ENCODE measurements at regions of chr16 and their contacts with region 1.

Region 1: GRCh38 chr16:3282730-3283524 is at the start of gene ZNF263:
- DNase-seq: peak; percentile 95
- ATAC-seq: peak; percentile 90
- H3K4me3 ChIP-seq: peak within 1 kb of the TSS; percentile 69 to 91
- H3K27ac ChIP-seq: peak within 1 kb of the TSS; percentile 96
- H3K4me1 ChIP-seq: peaks cover 8 to 21% of the 10 kb centered on the region in 2 experiments; a peak in 2 of 4 replicates
- H3K27me3 ChIP-seq: no peaks in the 10 kb centered on the region
- CTCF ChIP-seq: no peak
- POLR2A ChIP-seq: peak; percentile 64
- RAD21 ChIP-seq: no peak
- total RNA-seq, gene ZNF263: 31.4 TPM

Region 2: DNA sequence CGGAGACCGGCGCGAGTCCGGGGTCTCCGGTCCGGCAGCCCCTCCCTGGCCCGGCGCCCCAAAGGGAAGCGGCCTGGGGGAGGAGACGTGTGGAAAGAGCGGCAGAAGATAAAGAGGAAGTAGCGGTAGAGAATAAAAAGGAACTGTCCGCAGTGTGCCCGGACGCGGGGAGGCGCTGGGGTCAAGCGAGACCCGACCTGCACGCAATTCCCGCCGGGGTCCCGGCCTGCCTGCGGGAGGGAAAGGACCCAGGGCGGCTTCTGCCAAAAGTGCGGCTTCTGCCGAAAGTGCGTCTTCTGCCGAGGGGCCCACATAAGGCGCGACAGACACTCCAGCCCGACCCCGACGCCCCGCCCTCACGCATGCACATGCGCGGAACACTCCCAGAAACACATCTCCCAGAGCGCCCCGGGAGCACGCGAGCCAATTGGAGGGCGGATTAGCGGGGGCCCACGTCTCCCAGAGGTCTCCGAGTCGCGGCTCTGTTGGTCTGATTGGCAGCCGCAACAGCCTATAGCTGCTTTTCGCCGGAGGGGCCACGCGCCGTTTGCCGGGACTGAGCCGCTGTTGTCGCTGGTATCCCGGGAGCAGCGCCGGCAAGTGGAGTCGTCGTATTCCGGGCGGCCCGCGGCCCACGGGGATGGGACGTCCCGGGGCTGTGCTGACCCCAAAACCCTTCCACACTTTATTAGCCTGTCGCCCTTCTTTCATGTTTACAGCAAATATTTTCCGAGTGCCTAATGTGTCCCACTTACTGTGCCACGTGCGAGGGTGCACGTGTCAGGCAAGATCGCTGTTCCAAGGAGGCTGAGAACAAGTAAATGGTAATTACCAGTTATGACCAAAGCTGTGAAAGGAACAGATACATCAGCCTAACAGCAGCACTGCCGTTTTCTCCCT is 18.5 kb before region 1 on chr16:
- CTCF ChIA-PET with region 1: interaction called, 15 read pairs
- POLR2A ChIA-PET with region 1: interaction called, 7 read pairs
- RAD21 ChIA-PET with region 1: no interaction called
- intact Hi-C with region 1: loop called (anchors 2 kb)
- DNase-seq: peak; percentile 94
- ATAC-seq: peak; percentile 95
- H3K4me3 ChIP-seq: peak overlapping the region; percentile 62 to 65
- H3K27ac ChIP-seq: peak overlapping the region; percentile 89
- H3K4me1 ChIP-seq: peaks cover 14 to 28% of the 10 kb centered on the region in 2 experiments
- H3K27me3 ChIP-seq: no peaks in the 10 kb centered on the region
- CTCF ChIP-seq: peak in 1 of 3 experiments; percentile 29; a peak in 1 of 6 replicates
- POLR2A ChIP-seq: peak; percentile 62
- RAD21 ChIP-seq: no peak

Region 3: DNA sequence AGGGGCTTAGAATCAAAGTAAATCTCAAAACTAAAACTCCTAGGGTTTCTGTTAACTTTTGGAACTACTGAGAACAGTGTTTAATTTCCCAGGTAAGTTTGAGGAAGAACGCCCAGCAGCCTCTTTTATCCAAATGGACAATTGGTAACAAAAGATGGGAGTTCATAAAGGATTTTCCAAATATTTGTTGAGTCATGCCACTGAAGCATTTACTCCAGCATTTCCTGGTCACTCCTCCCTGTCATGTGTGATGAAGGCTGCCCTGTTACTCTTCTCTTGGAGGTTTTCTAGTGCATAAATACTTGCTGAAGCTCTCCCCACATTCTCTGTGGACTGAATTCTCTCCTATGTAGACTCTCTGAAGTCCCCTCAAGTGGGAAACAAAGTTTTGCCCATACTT is 38.9 kb after region 1 on chr16:
- CTCF ChIA-PET with region 1: no interaction called
- POLR2A ChIA-PET with region 1: no interaction called
- RAD21 ChIA-PET with region 1: no interaction called
- intact Hi-C with region 1: no loop called
- DNase-seq: no peak
- ATAC-seq: no peak
- H3K4me3 ChIP-seq: no peak overlapping the region
- H3K27ac ChIP-seq: no peak overlapping the region
- H3K4me1 ChIP-seq: 0 out of 4 replicates have a peak, but pooled peaks cover 0 to 3% of the 10 kb centered on the region in 2 experiments
- H3K27me3 ChIP-seq: no peaks in the 10 kb centered on the region
- CTCF ChIP-seq: no peak
- POLR2A ChIP-seq: no peak
- RAD21 ChIP-seq: no peak

Region 4: DNA sequence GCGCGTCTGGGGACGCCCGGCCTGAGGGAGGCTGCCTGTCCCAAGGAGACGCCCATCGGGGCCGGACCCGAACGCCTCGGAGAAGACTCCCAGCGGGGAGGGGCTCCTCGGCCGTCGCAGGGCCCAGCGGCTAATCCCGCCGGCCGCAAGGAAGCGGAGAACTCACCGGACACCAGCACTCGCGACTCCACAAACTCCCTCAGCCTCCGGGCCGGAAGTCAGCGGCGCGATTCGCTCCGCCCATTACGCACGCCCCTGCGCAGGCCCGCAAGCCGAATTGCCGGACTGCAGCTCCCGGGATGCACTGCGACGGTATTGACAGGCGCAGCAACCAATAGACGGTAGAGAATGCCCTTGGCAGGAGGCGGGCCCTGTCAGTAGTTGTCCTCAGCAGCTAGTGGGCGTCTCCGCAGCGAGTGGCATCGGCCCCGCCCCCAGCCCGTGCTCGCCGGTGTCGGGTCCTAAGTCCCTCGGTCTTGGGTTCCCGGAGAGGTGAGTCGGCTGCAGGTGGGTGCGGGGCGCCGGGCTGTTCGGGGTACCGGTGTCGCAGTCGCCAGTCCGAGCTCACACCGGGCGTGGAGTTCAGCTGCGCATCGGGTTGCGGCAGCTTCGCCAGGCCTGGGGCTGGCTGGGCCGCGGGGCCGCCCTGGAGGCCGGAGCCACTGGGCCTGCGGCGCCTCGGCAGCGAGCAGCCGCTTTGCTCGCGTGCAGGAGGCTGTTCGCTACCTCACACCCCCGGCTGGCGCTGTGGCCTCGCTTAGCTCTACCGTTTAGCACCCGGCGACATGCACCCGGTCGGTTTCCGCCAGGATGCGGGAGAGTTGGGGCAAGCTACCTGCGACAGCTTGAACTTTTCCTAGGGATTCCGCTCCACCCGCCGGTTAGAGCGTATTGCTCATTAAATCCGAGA is 118.1 kb after region 1 on chr16 and contains the starts of genes ZNF174 and ZSCAN32:
- CTCF ChIA-PET with region 1: no interaction called
- POLR2A ChIA-PET with region 1: interaction called, 3 read pairs
- RAD21 ChIA-PET with region 1: no interaction called
- intact Hi-C with region 1: loop called (anchors 1 kb)
- DNase-seq: peak; percentile 97
- ATAC-seq: peak; percentile 97
- H3K4me3 ChIP-seq: peak within 1 kb of the TSS; percentile 92 to 96
- H3K27ac ChIP-seq: peak within 1 kb of the TSS; percentile 83
- H3K4me1 ChIP-seq: peaks cover 5 to 12% of the 10 kb centered on the region in 2 experiments; a peak in 3 of 4 replicates
- H3K27me3 ChIP-seq: no peaks in the 10 kb centered on the region
- CTCF ChIP-seq: no peak
- POLR2A ChIP-seq: peak; percentile 82
- RAD21 ChIP-seq: 0 out of 2 replicates have a peak, but pooled peaks have one; percentile 2
- total RNA-seq, gene ZNF174: 8.2 TPM
- total RNA-seq, gene ZSCAN32: 20.0 TPM

Measured in HCT116 (cell line).